Calu3 (cell line): ENCODE measurements at regions of chr20 and their contacts with region 1.

Region 1: GRCh38 chr20:57546956-57547649 is 13.8 kb upstream of the PCK1 start:
- DNase-seq: peak; percentile 61
- H3K4me3 Mint-ChIP-seq: no peak overlapping the region
- H3K27ac Mint-ChIP-seq: no peak overlapping the region
- H3K4me1 Mint-ChIP-seq: no peaks in the 10 kb centered on the region
- H3K27me3 Mint-ChIP-seq: peaks cover 94% of the 10 kb centered on the region
- CTCF ChIP-seq: no peak

Region 2: GRCh38 chr20:59439243-59439642 is 1892.1 kb after region 1 on chr20:
- CTCF ChIA-PET with region 1: no interaction called
- intact Hi-C with region 1: loop called (anchors 10 kb)
- DNase-seq: peak; percentile 22
- H3K4me3 Mint-ChIP-seq: no peak overlapping the region
- H3K27ac Mint-ChIP-seq: no peak overlapping the region
- H3K4me1 Mint-ChIP-seq: no peaks in the 10 kb centered on the region
- H3K27me3 Mint-ChIP-seq: peaks cover 72% of the 10 kb centered on the region
- CTCF ChIP-seq: no peak